Activated naive CD4-positive, alpha-beta T cell treated with anti-CD3 and anti-CD28 coated beads, Interleukin-2, amount 10 ng/mL, durations not matched to agents 7 days and 5 days (primary cell): ENCODE measurements at regions of chr1 and their contacts with region 1.

Region 1: DNA sequence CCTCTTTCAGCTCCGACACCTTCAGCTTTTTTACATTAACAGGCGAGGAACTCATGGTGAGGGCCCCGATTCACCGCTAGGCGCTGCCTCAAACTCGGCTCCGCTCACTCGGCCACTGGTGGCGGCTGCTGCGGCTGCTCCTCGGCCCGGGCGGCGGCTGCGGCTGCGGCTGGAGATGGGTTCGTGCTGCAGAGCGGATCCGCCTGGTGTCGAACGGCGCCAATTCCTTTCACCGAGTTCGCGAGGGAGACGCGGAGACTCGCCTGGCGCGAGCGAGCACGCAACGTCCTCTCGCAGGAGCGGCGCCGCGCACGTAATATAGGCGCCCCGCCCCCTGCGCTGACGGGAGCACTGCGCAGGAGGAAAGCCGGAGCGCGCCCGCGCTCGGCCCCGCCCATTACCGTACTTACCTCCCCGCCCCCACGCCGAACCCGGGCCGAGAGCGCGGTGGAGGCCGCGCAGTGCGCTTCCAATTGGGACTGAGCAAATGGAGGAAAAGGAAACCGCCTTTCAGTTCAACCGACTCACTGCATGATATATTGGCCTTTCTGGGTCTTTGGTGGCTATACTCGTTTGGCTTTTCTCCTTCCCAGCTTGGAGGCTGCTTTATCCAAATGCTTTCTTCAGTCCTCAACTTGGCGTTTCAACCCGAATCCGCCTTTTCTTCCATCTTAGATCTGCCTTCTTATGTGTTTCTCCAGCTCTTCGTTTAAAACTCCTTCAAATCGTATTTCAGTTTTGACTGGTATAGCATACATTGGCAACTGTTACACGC is at the start of gene HNRNPU:
- DNase-seq: peak; percentile 95
- H3K4me3 Mint-ChIP-seq: peak within 1 kb of the TSS; percentile 82
- H3K27ac Mint-ChIP-seq: peak within 1 kb of the TSS; percentile 98
- H3K4me1 Mint-ChIP-seq: peaks cover 41% of the 10 kb centered on the region
- H3K27me3 Mint-ChIP-seq: peaks cover 7% of the 10 kb centered on the region

Region 2: GRCh38 chr1:244835276-244836134 is 28.9 kb before region 1 on chr1 and contains the start of gene COX20:
- CTCF ChIA-PET with region 1: interaction called, 14 read pairs
- DNase-seq: peak; percentile 88
- H3K4me3 Mint-ChIP-seq: peak within 1 kb of the TSS; percentile 87
- H3K27ac Mint-ChIP-seq: peak within 1 kb of the TSS; percentile 100
- H3K4me1 Mint-ChIP-seq: peaks cover 54% of the 10 kb centered on the region
- H3K27me3 Mint-ChIP-seq: no peaks in the 10 kb centered on the region